ENCODE measurements at regions of chr7 and their contacts with region 1.

Region 1: DNA sequence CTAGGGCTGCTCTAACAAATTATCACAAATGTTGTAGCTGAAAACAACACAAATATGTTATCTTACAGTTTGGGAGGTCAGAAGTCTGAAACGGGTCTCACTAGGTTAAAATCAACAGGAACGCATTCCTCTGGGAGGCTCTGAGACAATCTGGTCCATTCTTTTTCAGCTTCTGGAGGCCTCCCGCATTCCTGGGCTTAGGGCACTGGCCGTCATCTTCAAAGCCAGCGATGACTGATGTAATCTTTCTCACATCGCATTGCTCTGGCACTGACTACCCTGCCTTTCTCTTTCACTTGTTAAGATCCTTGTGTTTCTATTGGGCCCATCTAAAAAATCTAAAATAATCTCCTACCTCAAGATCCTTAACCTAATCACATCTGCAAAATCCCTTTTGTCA is 1071.5 kb upstream of the C7orf33 start:
- DNase-seq: no peak
- H3K4me3 Mint-ChIP-seq: no peak overlapping the region
- H3K27ac Mint-ChIP-seq: no peak overlapping the region
- H3K4me1 Mint-ChIP-seq: no peaks in the 10 kb centered on the region
- H3K27me3 Mint-ChIP-seq: no peaks in the 10 kb centered on the region

Region 2: DNA sequence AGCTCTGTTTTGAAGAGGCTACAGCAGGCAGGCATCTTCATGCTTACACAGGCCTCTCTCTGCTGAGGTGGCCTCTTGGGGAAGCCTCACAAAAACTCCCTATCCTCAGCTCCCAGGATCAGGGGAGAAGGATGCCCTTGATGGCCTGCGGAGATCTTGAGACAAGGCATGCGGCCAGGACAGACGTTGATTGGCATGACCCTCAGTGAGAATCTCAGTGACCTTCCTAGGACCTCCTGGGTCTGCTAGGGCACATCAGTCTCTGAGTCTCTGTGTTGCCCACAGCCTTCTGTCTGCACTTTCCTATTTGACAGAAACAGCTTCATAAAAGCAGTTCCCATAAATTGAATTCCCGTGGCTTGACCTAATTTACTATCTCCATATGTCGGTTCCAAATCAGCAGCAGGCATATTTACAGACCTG is 65.7 kb after region 1 on chr7:
- CTCF ChIA-PET with region 1: no interaction called
- POLR2A ChIA-PET with region 1: no interaction called
- DNase-seq: no peak
- H3K4me3 Mint-ChIP-seq: no peak overlapping the region
- H3K27ac Mint-ChIP-seq: no peak overlapping the region
- H3K4me1 Mint-ChIP-seq: no peaks in the 10 kb centered on the region
- H3K27me3 Mint-ChIP-seq: no peaks in the 10 kb centered on the region

Region 3: GRCh38 chr7:147711447-147711846 is 192.4 kb after region 1 on chr7:
- CTCF ChIA-PET with region 1: no interaction called
- POLR2A ChIA-PET with region 1: interaction called, 10 read pairs
- DNase-seq: no peak
- H3K4me3 Mint-ChIP-seq: no peak overlapping the region
- H3K27ac Mint-ChIP-seq: no peak overlapping the region
- H3K4me1 Mint-ChIP-seq: no peaks in the 10 kb centered on the region
- H3K27me3 Mint-ChIP-seq: no peaks in the 10 kb centered on the region

Measured in activated CD4-positive, alpha-beta T cell treated with anti-CD3 and anti-CD28 coated beads, Interleukin-2, amount 10 ng/mL, durations not matched to agents 7 days and 5 days (primary cell).